Gastrocnemius medialis (tissue), 4 donors: ENCODE measurements at regions of chr3 and their contacts with region 1.

Region 1: DNA sequence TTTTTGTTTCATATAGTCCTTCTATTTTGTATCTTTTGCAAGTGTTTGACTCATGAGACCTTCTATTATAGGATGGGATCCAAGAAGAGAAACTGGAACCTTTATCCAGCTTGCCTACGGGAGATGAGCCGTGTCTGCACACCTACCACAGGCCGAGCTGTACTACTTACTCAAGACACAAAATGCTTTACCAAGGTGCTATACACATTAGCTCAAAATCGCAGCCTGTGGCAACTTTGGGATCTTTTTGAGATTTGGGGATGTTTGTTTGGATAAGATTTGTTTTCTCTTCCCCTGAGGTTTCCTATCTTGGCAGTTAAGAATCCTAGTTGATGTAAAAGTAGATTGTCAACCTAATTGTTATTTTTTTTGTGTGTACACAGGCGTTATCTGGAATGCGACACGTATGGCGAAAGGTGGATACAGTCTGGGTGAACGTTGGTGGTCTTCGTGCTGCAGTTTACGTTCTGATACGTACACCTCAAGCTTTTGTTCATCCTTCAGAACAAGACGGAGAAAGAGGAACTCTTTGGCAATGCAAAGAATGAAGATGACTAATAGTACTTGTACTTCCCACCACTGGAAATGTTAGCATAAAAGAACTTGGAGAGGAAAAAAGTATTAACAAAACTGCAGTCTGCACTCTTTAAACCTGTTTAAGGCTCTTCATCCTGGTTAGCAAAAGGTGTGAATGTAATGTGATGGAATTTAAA is 13.1 kb upstream of the SETD5 start:
- DNase-seq: no peak
- ATAC-seq: no peak
- H3K4me3 ChIP-seq: no peak overlapping the region
- H3K27ac ChIP-seq: peak overlapping the region in 2 of 4 donors; percentile 14 to 45
- H3K4me1 ChIP-seq: no peaks in the 10 kb centered on the region
- H3K27me3 ChIP-seq: no peaks in the 10 kb centered on the region
- CTCF ChIP-seq: no peak
- POLR2A ChIP-seq: no peak

Region 2: GRCh38 chr3:9316881-9317361 is 67.4 kb before region 1 on chr3:
- in situ Hi-C with region 1: no loop called
- intact Hi-C with region 1: no loop called
- DNase-seq: no peak
- ATAC-seq: peak in 1 of 2 donors; percentile 27
- H3K4me3 ChIP-seq: peak overlapping the region in 3 of 4 donors; percentile 27 to 35 (median 33)
- H3K27ac ChIP-seq: peak overlapping the region; percentile 11 to 65 (median 42)
- H3K4me1 ChIP-seq: no peaks in the 10 kb centered on the region
- H3K27me3 ChIP-seq: no peaks in the 10 kb centered on the region
- CTCF ChIP-seq: no peak
- POLR2A ChIP-seq: no peak

Region 3: GRCh38 chr3:9439331-9439730 is 55.0 kb after region 1 on chr3:
- in situ Hi-C with region 1: loop called in 1 of 4 experiments (anchors 10 kb)
- intact Hi-C with region 1: no loop called
- DNase-seq: no peak
- ATAC-seq: no peak
- H3K4me3 ChIP-seq: no peak overlapping the region
- H3K27ac ChIP-seq: no peak overlapping the region
- H3K4me1 ChIP-seq: peaks cover 0 to 3% of the 10 kb centered on the region in 2 donors
- H3K27me3 ChIP-seq: no peaks in the 10 kb centered on the region
- CTCF ChIP-seq: no peak
- POLR2A ChIP-seq: no peak

Region 4: GRCh38 chr3:9600597-9600996 is 216.3 kb after region 1 on chr3:
- in situ Hi-C with region 1: no loop called
- intact Hi-C with region 1: no loop called
- DNase-seq: no peak
- ATAC-seq: no peak
- H3K4me3 ChIP-seq: peak overlapping the region in 1 of 4 donors; percentile 31
- H3K27ac ChIP-seq: no peak overlapping the region
- H3K4me1 ChIP-seq: no peaks in the 10 kb centered on the region
- H3K27me3 ChIP-seq: peaks cover 8 to 9% (median 9%) of the 10 kb centered on the region in 3 donors
- CTCF ChIP-seq: no peak
- POLR2A ChIP-seq: no peak